Calu3 (cell line): ENCODE measurements at regions of chr14 and their contacts with region 1.

Region 1: DNA sequence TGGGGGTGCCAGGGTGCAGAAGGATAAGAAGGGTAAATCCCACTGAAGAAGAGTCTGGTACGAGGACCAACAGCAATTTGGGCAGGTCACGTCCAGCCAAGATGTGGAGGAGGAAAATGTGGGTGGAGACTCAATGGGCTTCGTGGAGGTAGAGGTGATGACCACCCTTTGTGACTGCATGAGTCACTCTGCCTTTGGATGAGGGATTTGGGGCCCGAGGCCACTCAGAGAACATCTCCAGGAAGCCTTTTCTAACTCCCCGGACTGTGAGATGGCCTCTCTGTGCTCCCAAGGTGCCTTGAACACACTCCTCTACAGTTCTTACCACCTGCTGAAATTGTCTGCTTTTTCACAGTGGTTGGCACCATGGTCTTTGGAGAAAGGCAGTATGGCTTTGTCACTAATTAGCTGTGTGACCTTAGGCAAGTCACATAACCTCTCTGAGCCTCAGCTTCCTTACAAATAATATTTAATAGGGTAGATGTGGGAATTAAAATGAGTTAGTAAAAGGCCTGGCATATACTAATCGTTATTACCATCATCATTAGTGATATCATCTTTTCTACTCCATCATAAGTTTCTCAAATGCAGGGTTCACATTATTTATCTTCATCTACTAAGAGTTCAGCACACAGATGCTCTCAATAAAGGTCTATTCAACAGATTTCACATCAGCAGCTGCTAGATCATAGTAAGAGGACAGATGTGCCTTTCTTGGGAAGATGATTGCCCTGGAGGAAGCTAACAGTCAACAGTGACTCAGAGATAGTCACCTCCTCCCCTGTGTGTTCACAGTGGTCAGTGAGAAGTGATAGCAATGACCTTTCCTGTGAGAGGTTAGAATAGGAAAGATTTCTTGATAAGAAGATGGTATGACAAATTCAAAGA is 66.9 kb upstream of the ARHGAP5 start:
- DNase-seq: no peak
- H3K4me3 Mint-ChIP-seq: no peak overlapping the region
- H3K27ac Mint-ChIP-seq: peak overlapping the region; percentile 7
- H3K4me1 Mint-ChIP-seq: peaks cover 68% of the 10 kb centered on the region
- H3K27me3 Mint-ChIP-seq: no peaks in the 10 kb centered on the region
- CTCF ChIP-seq: no peak

Region 2: DNA sequence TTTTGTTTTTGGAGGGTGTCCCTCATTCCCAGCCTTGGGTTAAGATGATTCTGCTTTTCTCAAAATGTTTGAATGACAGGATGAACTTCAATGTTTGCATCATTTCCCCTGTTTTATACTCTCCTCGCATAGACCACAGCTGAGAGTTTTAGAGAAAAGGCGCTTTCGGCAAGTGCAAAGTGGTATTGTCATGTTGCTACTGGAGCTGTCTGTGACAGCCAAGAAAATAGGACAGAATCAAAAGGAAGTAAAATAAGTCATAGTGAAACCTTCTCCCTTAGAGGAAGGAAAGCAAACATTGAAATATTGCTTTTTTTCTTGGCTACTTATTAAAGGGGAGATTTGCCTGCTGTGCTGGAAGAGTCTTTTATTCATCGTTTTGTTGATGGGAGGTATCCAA is 33.4 kb after region 1 on chr14:
- CTCF ChIA-PET with region 1: interaction called, 4 read pairs
- intact Hi-C with region 1: loop called (anchors 5 kb)
- DNase-seq: no peak
- H3K4me3 Mint-ChIP-seq: no peak overlapping the region
- H3K27ac Mint-ChIP-seq: peak overlapping the region; percentile 81
- H3K4me1 Mint-ChIP-seq: peaks cover 10% of the 10 kb centered on the region
- H3K27me3 Mint-ChIP-seq: no peaks in the 10 kb centered on the region
- CTCF ChIP-seq: no peak